ENCODE measurements at regions of chr4 and their contacts with region 1.

Region 1: GRCh38 chr4:103075901-103076739 is 441 bp downstream of the SLC9B2 start:
- DNase-seq: peak; percentile 62
- H3K4me3 Mint-ChIP-seq: peak overlapping the region; percentile 82
- H3K27ac Mint-ChIP-seq: peak overlapping the region; percentile 98
- H3K4me1 Mint-ChIP-seq: peaks cover 47% of the 10 kb centered on the region
- H3K27me3 Mint-ChIP-seq: no peaks in the 10 kb centered on the region

Region 2: GRCh38 chr4:102620697-102621497 is 455.2 kb before region 1 on chr4:
- CTCF ChIA-PET with region 1: no interaction called
- intact Hi-C with region 1: loop called (anchors 5 kb)
- DNase-seq: peak; percentile 30
- H3K4me3 Mint-ChIP-seq: no peak overlapping the region
- H3K27ac Mint-ChIP-seq: no peak overlapping the region
- H3K4me1 Mint-ChIP-seq: peaks cover 52% of the 10 kb centered on the region
- H3K27me3 Mint-ChIP-seq: no peaks in the 10 kb centered on the region

Region 3: DNA sequence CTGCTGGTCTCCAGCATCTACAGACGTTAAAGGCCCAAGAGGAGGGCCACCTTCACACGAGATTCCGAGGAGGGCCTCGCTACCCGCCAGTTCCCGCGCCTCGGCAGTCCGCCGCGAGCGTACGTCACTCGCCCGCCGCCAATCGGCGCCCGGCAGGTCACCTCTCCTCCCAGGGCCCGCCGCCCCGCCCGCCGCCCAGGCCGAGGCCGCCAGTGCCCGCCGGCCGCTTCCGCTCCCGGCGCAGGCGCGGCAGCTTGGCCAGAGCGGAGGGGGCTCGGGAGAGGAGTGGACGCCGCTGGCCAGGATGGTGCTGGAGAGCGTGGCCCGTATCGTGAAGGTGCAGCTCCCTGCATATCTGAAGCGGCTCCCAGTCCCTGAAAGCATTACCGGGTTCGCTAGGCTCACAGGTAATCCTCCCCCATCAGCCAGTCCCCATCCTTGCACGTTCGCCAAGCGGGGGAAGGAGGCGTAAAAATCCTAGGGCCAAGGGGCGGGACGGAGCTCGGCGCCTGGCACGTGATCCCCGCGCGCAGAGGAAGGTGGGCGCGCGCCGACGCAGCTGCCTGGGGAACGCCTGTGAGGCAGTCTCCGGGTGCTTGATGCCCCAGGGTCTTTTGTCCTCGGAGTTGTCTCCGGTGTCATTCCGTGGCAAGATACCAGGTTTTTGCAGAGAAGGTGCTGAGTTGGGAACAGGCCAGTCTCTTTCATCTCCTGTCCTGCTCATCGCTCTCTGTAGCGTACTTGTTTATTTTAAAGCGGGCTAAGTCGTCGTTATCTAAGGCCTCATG is 207.1 kb before region 1 on chr4 and contains the start of gene CISD2:
- CTCF ChIA-PET with region 1: no interaction called
- intact Hi-C with region 1: loop called (anchors 1 kb)
- DNase-seq: peak; percentile 95
- H3K4me3 Mint-ChIP-seq: peak within 1 kb of the TSS; percentile 94
- H3K27ac Mint-ChIP-seq: peak within 1 kb of the TSS; percentile 97
- H3K4me1 Mint-ChIP-seq: peaks cover 51% of the 10 kb centered on the region
- H3K27me3 Mint-ChIP-seq: no peaks in the 10 kb centered on the region
- total RNA-seq, gene CISD2: 25.1 to 25.7 TPM

Region 4: GRCh38 chr4:103046416-103047290 is 29.5 kb before region 1 on chr4:
- CTCF ChIA-PET with region 1: interaction called, 5 read pairs
- intact Hi-C with region 1: loop called (anchors 2 kb)
- DNase-seq: peak; percentile 42
- H3K4me3 Mint-ChIP-seq: no peak overlapping the region
- H3K27ac Mint-ChIP-seq: no peak overlapping the region
- H3K4me1 Mint-ChIP-seq: peaks cover 10% of the 10 kb centered on the region
- H3K27me3 Mint-ChIP-seq: no peaks in the 10 kb centered on the region